ENCODE measurements at regions of chr17 and their contacts with region 1.

Region 1: DNA sequence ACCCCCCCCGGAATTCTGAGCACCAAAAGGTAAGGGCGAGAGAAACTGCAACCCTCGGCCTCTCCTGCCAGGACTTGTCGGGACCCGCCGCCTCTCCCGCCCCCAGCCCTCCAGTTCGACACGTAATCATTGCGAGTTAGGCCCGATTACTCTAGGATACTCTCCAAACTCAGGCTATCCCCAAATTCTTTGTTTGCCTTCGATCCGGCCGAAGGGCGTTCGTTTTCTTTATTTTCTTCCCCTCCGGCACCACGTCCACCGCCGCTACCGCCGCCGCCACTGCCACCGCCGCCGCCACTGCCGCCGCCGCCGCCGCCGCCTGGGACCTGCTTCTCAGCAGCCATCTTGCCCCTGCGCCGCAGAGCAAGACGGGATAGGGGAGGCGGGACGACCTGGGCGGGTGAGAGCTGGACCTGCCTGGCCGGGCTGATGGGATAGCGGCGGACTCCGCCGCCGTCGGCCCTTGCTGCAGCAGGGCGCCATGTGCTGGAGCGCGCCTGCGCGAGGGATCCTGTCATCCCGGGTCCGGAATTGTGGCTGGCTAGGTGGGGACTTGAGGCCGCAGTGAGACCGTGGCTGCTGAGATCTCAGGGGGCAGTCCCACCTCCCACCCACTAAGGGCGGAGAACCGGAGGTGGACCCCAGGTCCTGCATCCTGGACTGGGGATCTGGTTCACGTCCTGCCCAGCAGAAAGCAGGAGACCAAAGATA is at the start of gene SRP68:
- DNase-seq: peak; percentile 96
- H3K4me3 Mint-ChIP-seq: peak within 1 kb of the TSS; percentile 99
- H3K27ac Mint-ChIP-seq: peak within 1 kb of the TSS; percentile 100
- H3K4me1 Mint-ChIP-seq: peaks cover 36% of the 10 kb centered on the region
- H3K27me3 Mint-ChIP-seq: peaks cover 29% of the 10 kb centered on the region
- total RNA-seq, gene SRP68: 169 and 170 TPM in 2 replicates

Region 2: DNA sequence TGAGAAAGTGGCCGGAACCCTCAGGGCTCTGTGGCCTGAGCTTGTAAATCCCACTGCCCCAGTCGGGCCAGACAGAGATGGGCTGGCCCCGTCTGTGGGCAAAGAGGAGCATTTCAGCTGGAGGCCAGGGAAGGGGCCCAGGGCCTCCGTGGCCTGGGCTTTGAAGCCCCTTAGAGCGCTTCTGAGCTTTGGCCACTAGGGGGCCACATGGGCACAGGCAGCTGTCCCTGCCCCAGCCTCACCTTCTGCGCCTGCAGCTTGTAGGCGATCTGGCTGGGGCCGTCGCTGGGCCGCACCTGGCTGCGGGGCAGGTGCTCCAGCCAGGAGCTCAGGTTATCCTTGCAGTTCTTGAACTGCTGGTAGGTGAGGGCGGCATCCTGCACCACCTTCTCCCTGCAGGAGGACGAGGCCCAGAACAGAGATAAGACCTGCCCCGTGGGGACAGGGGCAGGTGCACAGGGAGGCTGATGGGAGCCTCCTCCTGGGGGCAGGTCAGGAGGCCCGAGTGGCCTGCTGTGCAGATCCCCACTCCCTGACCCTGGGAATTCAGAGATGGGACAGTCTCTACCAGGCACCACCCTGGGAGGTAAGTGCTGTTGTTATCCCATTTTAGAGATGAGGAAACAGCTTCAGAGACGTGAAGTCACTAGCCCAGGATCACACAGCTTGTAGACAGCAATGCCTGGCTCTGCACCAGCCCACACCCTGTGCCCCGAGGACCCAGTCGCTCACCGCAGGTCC is 57.9 kb before region 1 on chr17:
- intact Hi-C with region 1: loop called (anchors 5 kb)
- DNase-seq: peak; percentile 94
- H3K4me3 Mint-ChIP-seq: no peak overlapping the region
- H3K27ac Mint-ChIP-seq: no peak overlapping the region
- H3K4me1 Mint-ChIP-seq: peaks cover 4% of the 10 kb centered on the region
- H3K27me3 Mint-ChIP-seq: no peaks in the 10 kb centered on the region

Region 3: DNA sequence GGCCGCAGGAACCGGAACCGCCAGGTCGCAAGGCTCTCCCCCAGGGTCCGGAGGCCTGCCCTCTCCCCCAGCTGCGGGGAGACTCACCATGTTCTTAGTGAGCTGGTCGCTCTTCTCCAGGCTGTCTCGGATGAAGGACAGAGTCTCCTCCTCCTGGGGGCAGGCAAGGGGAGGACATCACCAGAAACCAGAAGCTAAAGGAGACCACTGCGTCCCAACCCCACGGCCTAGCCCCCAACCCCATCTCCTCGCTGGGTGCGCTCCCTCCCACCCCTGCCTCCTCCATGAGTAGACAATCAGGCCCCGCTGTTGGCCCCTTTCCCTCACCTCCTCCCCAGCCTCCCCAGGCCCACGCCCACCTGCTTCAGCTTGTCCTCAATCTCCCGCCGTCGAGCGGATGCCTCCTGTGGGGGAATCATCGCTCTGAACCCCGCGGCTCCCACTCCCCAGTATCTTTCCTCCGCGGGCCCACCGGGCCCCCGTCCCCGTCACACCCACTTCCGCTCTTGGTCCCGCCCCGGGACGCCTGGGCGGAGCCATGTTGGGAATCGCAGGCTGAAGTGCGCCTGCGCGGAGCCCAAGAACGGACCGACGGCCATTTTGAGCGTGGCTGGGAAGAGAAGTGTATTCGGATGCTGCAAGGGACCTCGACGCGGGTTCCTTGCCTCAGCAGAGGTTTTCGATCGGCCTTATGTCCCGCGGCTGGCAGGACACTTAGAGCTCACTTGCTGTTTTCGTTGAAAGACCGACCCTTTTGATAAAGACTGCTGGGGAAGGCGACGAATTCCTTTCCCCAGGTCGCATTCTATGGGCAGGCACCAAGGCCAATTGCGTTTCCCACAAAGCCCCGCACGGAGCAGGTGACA is 31.2 kb after region 1 on chr17 and contains the start of gene EXOC7:
- intact Hi-C with region 1: loop called (anchors 1 kb)
- DNase-seq: peak; percentile 99
- H3K4me3 Mint-ChIP-seq: peak within 1 kb of the TSS; percentile 99
- H3K27ac Mint-ChIP-seq: peak within 1 kb of the TSS; percentile 97
- H3K4me1 Mint-ChIP-seq: peaks cover 20% of the 10 kb centered on the region
- H3K27me3 Mint-ChIP-seq: no peaks in the 10 kb centered on the region
- total RNA-seq, gene EXOC7: 104 and 108 TPM in 2 replicates

Region 4: DNA sequence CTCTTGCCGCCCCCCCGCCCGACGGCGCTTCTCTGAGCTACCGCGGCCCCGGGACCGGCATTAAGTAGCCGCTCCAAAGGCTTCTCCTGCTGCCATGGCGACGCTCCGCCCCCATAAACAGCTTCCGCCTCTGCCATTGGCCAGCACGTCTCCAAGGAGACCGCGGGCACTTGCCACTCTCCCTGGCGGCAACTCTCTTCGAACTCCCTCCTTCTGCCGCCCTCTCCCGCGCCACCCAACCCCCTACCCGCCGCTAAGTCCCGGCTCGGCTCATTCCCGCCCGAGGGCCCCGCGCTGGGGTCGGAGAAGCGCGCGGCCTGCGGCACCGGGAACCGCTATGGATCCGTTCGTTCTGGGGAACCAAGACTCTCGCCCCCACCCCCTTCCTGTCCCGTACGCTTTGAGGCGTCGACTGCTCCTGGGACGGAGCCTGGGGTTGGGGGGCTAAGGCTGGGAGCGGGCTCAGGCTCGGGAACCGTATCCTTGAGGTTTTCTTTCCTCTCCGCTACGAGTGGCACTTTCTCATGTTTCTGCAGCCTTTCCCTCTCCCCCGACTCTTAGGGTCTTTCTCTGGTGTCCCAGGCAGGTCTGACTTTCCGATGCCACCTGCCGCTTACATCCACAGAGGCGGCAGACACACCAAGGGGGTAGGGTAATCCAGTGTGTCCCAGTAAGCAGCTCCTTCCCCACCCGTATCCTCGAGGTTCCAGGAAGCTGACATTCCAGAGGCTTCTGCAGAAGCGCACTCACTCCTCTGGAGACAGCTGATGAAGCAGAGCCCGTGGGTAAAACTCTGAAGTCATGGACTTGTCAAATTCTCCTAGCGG is 69.1 kb after region 1 on chr17 and contains the start of gene FOXJ1:
- intact Hi-C with region 1: no loop called
- DNase-seq: peak; percentile 98
- H3K4me3 Mint-ChIP-seq: peak within 1 kb of the TSS; percentile 83
- H3K27ac Mint-ChIP-seq: peak within 1 kb of the TSS; percentile 11
- H3K4me1 Mint-ChIP-seq: peaks cover 51% of the 10 kb centered on the region
- H3K27me3 Mint-ChIP-seq: peaks cover 13% of the 10 kb centered on the region
- total RNA-seq, gene FOXJ1: 0.07 and 0.35 TPM in 2 replicates

Region 5: GRCh38 chr17:76271669-76272540 is 199.6 kb after region 1 on chr17:
- intact Hi-C with region 1: loop called (anchors 5 kb)
- DNase-seq: peak; percentile 92
- H3K4me3 Mint-ChIP-seq: peak overlapping the region; percentile 83
- H3K27ac Mint-ChIP-seq: peak overlapping the region; percentile 96
- H3K4me1 Mint-ChIP-seq: peaks cover 51% of the 10 kb centered on the region
- H3K27me3 Mint-ChIP-seq: no peaks in the 10 kb centered on the region

Region 6: GRCh38 chr17:76353599-76354316 is 281.5 kb after region 1 on chr17 and contains the start of gene PRPSAP1:
- intact Hi-C with region 1: loop called (anchors 5 kb)
- DNase-seq: peak; percentile 95
- H3K4me3 Mint-ChIP-seq: peak within 1 kb of the TSS; percentile 92
- H3K27ac Mint-ChIP-seq: peak within 1 kb of the TSS; percentile 99
- H3K4me1 Mint-ChIP-seq: peaks cover 25% of the 10 kb centered on the region
- H3K27me3 Mint-ChIP-seq: peaks cover 3% of the 10 kb centered on the region
- total RNA-seq, gene PRPSAP1: 37.2 and 45.2 TPM in 2 replicates

Measured in activated CD4-positive, alpha-beta T cell treated with anti-CD3 and anti-CD28 coated beads, Interleukin-2, amount 10 ng/mL, durations not matched to agents 24 days and 14 days (primary cell).